ENCODE measurements at regions of chr10 and their contacts with region 1.

Region 1: GRCh38 chr10:28545967-28546644 is 13.2 kb downstream of the WAC start:
- DNase-seq: no peak
- ATAC-seq: peak; percentile 64
- H3K4me3 Mint-ChIP-seq: no peak overlapping the region
- H3K27ac Mint-ChIP-seq: peak overlapping the region; percentile 70
- H3K4me1 Mint-ChIP-seq: peaks cover 55% of the 10 kb centered on the region
- H3K27me3 Mint-ChIP-seq: no peaks in the 10 kb centered on the region

Region 2: GRCh38 chr10:28387141-28387540 is 159.0 kb before region 1 on chr10:
- CTCF ChIA-PET with region 1: no interaction called
- POLR2A ChIA-PET with region 1: no interaction called
- DNase-seq: no peak
- ATAC-seq: no peak
- H3K4me3 Mint-ChIP-seq: no peak overlapping the region
- H3K27ac Mint-ChIP-seq: no peak overlapping the region
- H3K4me1 Mint-ChIP-seq: peaks cover 9% of the 10 kb centered on the region
- H3K27me3 Mint-ChIP-seq: peaks cover 4% of the 10 kb centered on the region

Region 3: DNA sequence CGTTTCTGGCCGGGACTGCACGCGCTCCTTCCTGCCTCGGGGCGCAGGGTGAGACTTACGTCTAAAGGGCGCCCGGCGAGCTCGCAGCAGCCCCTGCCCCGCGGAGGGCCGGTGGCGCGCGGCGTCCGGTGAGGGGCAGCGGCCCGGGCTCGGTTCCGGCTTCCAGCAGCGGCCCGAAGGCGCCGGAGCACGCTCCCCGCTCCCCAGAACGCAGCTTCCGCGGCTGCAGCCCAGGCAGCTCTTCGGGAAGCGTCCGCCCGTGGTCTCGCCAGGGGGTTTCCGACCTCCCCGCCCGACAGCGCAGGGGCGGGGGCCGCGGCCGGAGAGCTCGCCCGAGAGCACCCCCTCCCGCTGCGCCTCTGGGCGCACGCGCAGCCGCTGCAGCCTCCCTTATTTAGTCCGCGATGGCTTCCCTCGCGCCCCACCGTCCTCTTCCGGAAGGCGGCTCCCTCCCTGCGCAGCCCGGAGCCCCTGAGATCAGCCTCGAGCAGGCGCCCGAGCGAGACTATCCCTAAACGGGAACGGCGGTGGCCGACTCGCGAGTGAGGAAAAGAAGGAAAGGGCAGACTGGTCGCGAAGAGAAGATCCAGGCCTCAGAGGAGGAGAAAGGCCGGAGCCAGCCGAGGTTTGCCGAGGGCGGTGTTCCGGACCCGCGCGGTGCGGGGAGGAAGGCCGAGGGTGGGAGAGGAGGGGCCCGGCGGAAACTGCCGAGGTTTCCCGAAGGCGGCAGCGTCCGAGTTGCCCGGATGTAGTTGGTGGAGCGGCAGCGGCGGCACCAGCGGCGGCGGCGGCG is 13.5 kb before region 1 on chr10 and contains the start of gene WAC:
- CTCF ChIA-PET with region 1: interaction called, 9 read pairs
- POLR2A ChIA-PET with region 1: interaction called, 23 read pairs
- DNase-seq: peak; percentile 97
- ATAC-seq: peak; percentile 84
- H3K4me3 Mint-ChIP-seq: peak within 1 kb of the TSS; percentile 98
- H3K27ac Mint-ChIP-seq: peak within 1 kb of the TSS; percentile 100
- H3K4me1 Mint-ChIP-seq: peaks cover 53% of the 10 kb centered on the region
- H3K27me3 Mint-ChIP-seq: no peaks in the 10 kb centered on the region
- total RNA-seq, gene WAC: 126 to 131 TPM